OCI-LY7 (cell line): ENCODE measurements at regions of chr17 and their contacts with region 1.

Region 1: DNA sequence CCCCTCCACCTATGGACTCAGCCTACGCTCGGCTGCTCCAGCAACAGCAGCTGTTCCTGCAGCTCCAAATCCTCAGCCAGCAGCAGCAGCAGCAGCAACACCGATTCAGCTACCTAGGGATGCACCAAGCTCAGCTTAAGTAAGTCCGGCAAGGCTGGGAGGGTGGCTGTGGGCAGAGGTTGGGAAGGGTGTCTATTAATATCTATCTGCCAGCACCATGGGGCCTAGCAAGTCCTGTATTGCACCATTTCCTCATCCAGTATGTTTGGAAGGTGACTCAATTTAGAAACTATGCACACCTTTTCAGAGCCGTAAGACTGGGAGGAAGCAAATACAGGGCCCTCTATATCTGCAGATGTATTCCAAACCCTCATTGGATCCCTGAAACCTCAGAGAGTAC is 45.0 kb upstream of the ARHGAP44 start:
- DNase-seq: no peak
- H3K4me3 ChIP-seq: no peak overlapping the region
- H3K27ac ChIP-seq: no peak overlapping the region
- H3K4me1 ChIP-seq: no peaks in the 10 kb centered on the region
- CTCF ChIP-seq: no peak

Region 2: DNA sequence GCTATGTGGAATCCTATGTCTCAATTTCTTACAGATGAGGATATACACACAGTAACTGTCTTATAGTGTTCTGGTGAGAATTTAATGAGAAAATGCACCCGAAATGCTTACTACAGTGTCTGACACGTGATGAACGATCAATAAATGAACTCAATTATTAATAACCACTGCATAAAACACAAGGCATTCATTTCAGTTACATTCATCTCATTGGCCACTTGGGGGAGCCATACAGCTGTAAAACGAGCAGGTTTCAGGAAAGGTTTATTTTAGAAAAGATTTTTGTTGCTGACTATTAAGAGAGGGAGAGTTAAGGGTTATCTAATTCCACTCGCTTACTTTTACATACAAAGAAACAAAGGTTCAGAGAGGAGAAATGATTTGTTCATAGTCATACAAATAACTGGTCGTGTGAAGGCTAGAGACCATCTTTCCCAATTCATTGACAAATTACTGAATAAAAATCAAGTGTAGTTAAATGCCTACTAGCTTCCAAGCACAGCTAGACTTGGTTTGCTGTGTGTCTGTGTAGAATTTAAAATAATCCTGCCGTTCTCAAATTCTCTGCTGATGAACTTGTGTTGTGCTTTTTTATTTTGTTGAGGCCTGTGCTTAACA is 563.5 kb before region 1 on chr17:
- CTCF ChIA-PET with region 1: no interaction called
- POLR2A ChIA-PET with region 1: no interaction called
- intact Hi-C with region 1: loop called (anchors 5 kb)
- DNase-seq: peak; percentile 54
- H3K4me3 ChIP-seq: no peak overlapping the region
- H3K27ac ChIP-seq: no peak overlapping the region
- H3K4me1 ChIP-seq: no peaks in the 10 kb centered on the region
- CTCF ChIP-seq: peak; percentile 95

Region 3: GRCh38 chr17:12415031-12415430 is 329.3 kb before region 1 on chr17:
- CTCF ChIA-PET with region 1: no interaction called
- POLR2A ChIA-PET with region 1: interaction called, 11 read pairs
- intact Hi-C with region 1: no loop called
- DNase-seq: no peak
- H3K4me3 ChIP-seq: no peak overlapping the region
- H3K27ac ChIP-seq: no peak overlapping the region
- H3K4me1 ChIP-seq: no peaks in the 10 kb centered on the region
- CTCF ChIP-seq: no peak

Region 4: GRCh38 chr17:12620200-12620720 is 124.0 kb before region 1 on chr17:
- CTCF ChIA-PET with region 1: no interaction called
- POLR2A ChIA-PET with region 1: no interaction called
- intact Hi-C with region 1: no loop called
- DNase-seq: no peak
- H3K4me3 ChIP-seq: no peak overlapping the region
- H3K27ac ChIP-seq: no peak overlapping the region
- H3K4me1 ChIP-seq: no peaks in the 10 kb centered on the region
- CTCF ChIP-seq: no peak

Region 5: GRCh38 chr17:12637015-12637414 is 107.3 kb before region 1 on chr17:
- CTCF ChIA-PET with region 1: no interaction called
- POLR2A ChIA-PET with region 1: no interaction called
- intact Hi-C with region 1: no loop called
- DNase-seq: no peak
- H3K4me3 ChIP-seq: no peak overlapping the region
- H3K27ac ChIP-seq: no peak overlapping the region
- H3K4me1 ChIP-seq: no peaks in the 10 kb centered on the region
- CTCF ChIP-seq: no peak